ENCODE measurements at regions of chr5 and their contacts with region 1.

Region 1: DNA sequence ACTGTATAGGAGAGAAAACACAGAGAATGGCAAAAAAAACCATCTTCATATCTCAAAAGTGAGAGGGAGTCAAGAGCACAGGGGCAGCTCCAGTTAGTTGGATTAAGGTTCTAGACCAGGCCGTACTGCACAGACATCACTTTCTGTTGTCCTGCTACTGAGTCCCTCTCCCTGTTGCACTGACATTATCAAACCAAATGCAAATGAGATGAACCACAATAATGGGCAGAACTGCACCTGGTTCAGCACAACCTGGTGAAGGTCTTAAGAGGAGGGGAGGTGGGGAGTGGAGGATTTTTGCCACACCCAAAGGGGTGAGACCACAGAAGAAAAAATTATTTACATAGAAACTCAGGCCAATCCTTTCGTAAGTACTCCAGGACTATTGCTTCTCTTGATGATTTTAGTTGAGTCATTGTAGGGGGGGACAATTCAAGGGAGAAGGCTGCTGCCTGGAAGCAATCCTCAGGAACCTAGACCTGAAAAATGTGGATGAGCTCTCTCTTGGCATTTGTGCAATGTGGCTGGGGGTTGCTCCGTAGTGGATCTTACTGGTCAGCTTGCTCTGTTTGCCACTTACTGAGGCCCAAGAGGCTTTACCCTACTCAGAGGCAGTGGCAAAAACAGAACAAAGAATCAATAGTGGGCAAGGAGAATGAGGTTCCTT is 94.5 kb upstream of the PPP1R2B start:
- DNase-seq: peak; percentile 56
- H3K4me3 ChIP-seq: no peak overlapping the region
- H3K27ac ChIP-seq: no peak overlapping the region
- H3K4me1 ChIP-seq: peaks cover 35% of the 10 kb centered on the region
- CTCF ChIP-seq: no peak

Region 2: DNA sequence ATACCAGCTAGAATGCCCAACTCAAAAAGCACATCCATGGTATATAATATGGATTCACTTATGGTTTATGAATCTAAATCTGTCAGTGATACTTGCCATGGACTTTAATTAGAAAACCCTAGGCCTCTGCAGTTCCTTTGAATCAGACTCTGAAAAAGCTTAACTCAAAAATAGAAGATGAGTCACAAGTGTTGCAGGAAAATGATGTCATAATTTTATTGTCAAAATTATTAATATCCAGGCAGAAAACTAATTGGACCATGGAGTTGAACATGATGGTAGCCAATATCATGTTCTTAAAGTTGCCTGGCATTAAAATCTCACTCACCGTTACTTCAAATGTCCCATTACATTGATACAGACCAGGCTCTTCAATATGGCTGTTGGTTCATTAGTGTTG is 15.7 kb before region 1 on chr5:
- CTCF ChIA-PET with region 1: no interaction called
- POLR2A ChIA-PET with region 1: interaction called, 13 read pairs
- intact Hi-C with region 1: no loop called
- DNase-seq: no peak
- H3K4me3 ChIP-seq: no peak overlapping the region
- H3K27ac ChIP-seq: no peak overlapping the region
- H3K4me1 ChIP-seq: peaks cover 6% of the 10 kb centered on the region
- CTCF ChIP-seq: no peak

Region 3: DNA sequence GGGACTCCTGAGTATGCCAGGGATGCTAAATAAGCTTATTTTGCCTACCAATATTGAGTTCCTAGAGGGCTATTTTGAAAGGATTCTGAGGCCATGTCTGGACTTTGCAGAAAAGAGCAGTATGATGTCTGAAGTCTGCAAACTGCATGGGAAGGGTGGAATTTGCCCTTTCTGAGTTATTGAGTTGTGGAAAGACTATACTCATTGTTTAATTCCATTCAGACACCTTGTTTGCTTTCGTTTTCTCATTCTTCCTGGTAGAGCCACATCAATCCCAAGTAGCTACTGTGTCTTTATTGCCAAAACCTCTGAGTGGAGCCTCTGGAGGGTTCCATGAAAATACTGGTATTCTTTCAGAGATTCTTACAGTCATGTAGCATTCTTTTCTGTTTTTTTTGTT is 43.6 kb after region 1 on chr5:
- CTCF ChIA-PET with region 1: no interaction called
- POLR2A ChIA-PET with region 1: no interaction called
- intact Hi-C with region 1: no loop called
- DNase-seq: no peak
- H3K4me3 ChIP-seq: no peak overlapping the region
- H3K27ac ChIP-seq: no peak overlapping the region
- H3K4me1 ChIP-seq: peaks cover 22% of the 10 kb centered on the region
- CTCF ChIP-seq: no peak

Measured in OCI-LY7 (cell line).